Endothelial cell of umbilical vein (primary cell): ENCODE measurements at regions of chr1 and their contacts with region 1.

Region 1: GRCh38 chr1:15337656-15338402 is 71.9 kb upstream of the EFHD2 start:
- DNase-seq: peak; percentile 83
- H3K4me3 ChIP-seq: no peak overlapping the region
- H3K27ac ChIP-seq: peak overlapping the region; percentile 89
- H3K4me1 ChIP-seq: peaks cover 44% of the 10 kb centered on the region
- H3K27me3 ChIP-seq: no peaks in the 10 kb centered on the region
- CTCF ChIP-seq: no peak
- POLR2A ChIP-seq: peak; percentile 63

Region 2: DNA sequence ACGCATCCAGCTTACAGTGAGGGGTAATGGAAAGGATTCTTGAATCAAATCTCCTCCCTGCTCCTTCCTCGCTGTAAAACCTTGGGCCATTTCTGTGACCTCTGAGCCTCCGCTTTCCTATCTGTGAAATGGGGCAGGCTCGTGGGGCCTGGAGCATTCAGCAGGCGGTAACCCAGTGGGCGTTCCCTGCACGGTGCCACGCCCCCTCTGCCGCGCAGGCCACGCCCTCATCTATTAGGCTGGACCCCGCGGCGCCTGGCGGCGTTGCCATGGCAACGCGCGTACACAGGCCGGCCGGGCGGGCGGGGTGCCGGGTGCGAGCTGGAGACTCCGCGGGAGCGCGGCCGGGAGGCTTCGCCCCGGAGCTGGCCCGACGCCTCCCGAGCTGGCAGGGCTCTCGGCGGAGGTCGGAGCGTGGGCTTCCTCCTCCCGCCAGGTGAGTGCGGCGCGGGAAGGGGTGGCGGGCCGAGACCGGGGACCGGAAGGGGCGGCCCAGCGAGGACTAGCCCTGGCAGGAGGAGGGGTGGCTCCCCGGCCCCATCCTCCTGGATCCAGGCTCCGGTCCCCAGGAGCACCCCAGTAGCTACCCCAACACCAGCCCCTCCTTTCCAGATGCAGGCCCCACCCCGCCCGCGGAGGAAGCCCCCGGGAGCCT is 90.7 kb before region 1 on chr1 and contains the start of gene FHAD1:
- CTCF ChIA-PET with region 1: no interaction called
- POLR2A ChIA-PET with region 1: no interaction called
- dilution Hi-C with region 1: no loop called
- intact Hi-C with region 1: no loop called
- DNase-seq: peak; percentile 64
- H3K4me3 ChIP-seq: peak within 1 kb of the TSS in 2 of 3 experiments; percentile 18 to 46
- H3K27ac ChIP-seq: no peak within 1 kb of the TSS
- H3K4me1 ChIP-seq: peaks cover 3% of the 10 kb centered on the region
- H3K27me3 ChIP-seq: peaks cover 23 to 24% of the 10 kb centered on the region in 2 experiments
- CTCF ChIP-seq: no peak
- POLR2A ChIP-seq: no peak
- total RNA-seq, gene FHAD1: 0.51 and 0.69 TPM in 2 replicates

Region 3: GRCh38 chr1:15352123-15352957 is 14.5 kb after region 1 on chr1:
- CTCF ChIA-PET with region 1: interaction called, 4 read pairs
- POLR2A ChIA-PET with region 1: interaction called, 9 read pairs
- dilution Hi-C with region 1: no loop called
- intact Hi-C with region 1: loop called (anchors 1 kb)
- DNase-seq: peak; percentile 81
- H3K4me3 ChIP-seq: no peak overlapping the region
- H3K27ac ChIP-seq: peak overlapping the region; percentile 73
- H3K4me1 ChIP-seq: peaks cover 20% of the 10 kb centered on the region
- H3K27me3 ChIP-seq: no peaks in the 10 kb centered on the region
- CTCF ChIP-seq: no peak
- POLR2A ChIP-seq: no peak

Region 4: GRCh38 chr1:15386164-15386749 is 48.4 kb after region 1 on chr1:
- CTCF ChIA-PET with region 1: no interaction called
- POLR2A ChIA-PET with region 1: no interaction called
- dilution Hi-C with region 1: no loop called
- intact Hi-C with region 1: loop called (anchors 1 kb)
- DNase-seq: no peak
- H3K4me3 ChIP-seq: no peak overlapping the region
- H3K27ac ChIP-seq: no peak overlapping the region
- H3K4me1 ChIP-seq: no peaks in the 10 kb centered on the region
- H3K27me3 ChIP-seq: peaks cover 0 to 3% of the 10 kb centered on the region in 2 experiments
- CTCF ChIP-seq: no peak
- POLR2A ChIP-seq: no peak

Region 5: GRCh38 chr1:15526490-15527339 is 188.9 kb after region 1 on chr1 and contains the start of gene DNAJC16:
- CTCF ChIA-PET with region 1: no interaction called
- POLR2A ChIA-PET with region 1: no interaction called
- dilution Hi-C with region 1: no loop called
- intact Hi-C with region 1: loop called (anchors 1 kb)
- DNase-seq: peak; percentile 100
- H3K4me3 ChIP-seq: peak within 1 kb of the TSS; percentile 52 to 87 (median 74)
- H3K27ac ChIP-seq: peak within 1 kb of the TSS; percentile 44
- H3K4me1 ChIP-seq: peaks cover 24% of the 10 kb centered on the region
- H3K27me3 ChIP-seq: no peaks in the 10 kb centered on the region
- CTCF ChIP-seq: peak in 1 of 2 donors; percentile 4
- POLR2A ChIP-seq: peak; percentile 90
- total RNA-seq, gene DNAJC16: 21.4 and 23.3 TPM in 2 replicates